ENCODE measurements at regions of chr6 and their contacts with region 1.

Region 1: GRCh38 chr6:30616811-30617564 is at the start of gene PPP1R10:
- DNase-seq: peak; percentile 86 to 100 (median 99)
- ATAC-seq: peak; percentile 89
- H3K4me3 ChIP-seq: peak within 1 kb of the TSS; percentile 90
- H3K4me3 Mint-ChIP-seq: peak within 1 kb of the TSS; percentile 88 to 100 (median 96)
- H3K27ac ChIP-seq: peak within 1 kb of the TSS; percentile 93
- H3K27ac Mint-ChIP-seq: peak within 1 kb of the TSS; percentile 98 to 100 (median 100)
- H3K4me1 ChIP-seq: peaks cover 21 to 33% of the 10 kb centered on the region in 2 donors
- H3K4me1 Mint-ChIP-seq: peaks cover 28 to 51% (median 43%) of the 10 kb centered on the region in 7 donors
- H3K27me3 ChIP-seq: no peaks in the 10 kb centered on the region
- H3K27me3 Mint-ChIP-seq: peaks cover 0 to 14% (median 0%) of the 10 kb centered on the region in 5 donors
- total RNA-seq, gene PPP1R10: 108 to 286 (median 146) TPM

Region 2: DNA sequence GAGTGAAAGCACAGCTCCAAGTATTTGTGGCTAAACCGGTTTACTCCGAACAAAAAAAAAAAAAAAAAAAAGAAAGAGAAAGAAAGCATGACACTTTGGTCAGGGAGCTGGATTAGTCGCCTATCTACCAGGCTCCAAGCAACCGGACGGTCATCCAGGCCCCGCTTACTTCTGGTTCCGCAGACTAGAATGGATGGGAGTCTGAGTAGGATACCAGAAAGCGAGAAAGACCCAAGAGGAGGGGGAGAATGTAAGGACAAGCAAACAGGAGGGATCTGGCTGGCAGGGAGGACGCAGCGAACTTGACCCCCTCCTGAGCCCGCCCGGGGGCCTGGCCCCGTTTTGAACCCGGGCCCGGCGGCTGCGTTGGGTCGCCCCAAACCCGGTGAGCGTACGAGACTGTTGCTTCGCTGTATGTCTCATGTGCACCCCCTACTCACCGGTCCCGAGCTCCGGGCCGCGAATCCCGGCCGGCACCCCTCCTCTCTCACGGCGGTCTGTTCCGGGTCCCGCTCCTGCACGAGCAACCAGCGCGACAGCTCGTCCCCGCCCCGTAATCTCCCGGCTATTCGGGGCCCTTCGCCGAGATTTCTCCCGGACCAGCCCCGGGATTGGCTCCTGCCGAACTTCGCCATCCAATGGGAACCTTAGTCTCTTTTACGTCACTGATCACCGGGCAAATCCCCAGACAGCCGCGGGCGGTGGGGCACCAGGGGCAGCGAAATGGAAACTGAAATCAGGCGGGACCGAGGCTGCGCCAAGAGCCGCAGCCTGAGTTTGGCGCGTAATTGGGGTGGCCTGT is 403.9 kb before region 1 on chr6 and contains the start of gene TRIM26:
- CTCF ChIA-PET with region 1: no interaction called
- POLR2A ChIA-PET with region 1: no interaction called
- intact Hi-C with region 1: loop called in 1 of 2 experiments (anchors 5 kb)
- DNase-seq: peak; percentile 88 to 99 (median 97)
- ATAC-seq: peak; percentile 94
- H3K4me3 ChIP-seq: peak within 1 kb of the TSS; percentile 83
- H3K4me3 Mint-ChIP-seq: peak within 1 kb of the TSS; percentile 89 to 100 (median 96)
- H3K27ac ChIP-seq: peak within 1 kb of the TSS; percentile 99
- H3K27ac Mint-ChIP-seq: peak within 1 kb of the TSS; percentile 96 to 100 (median 99)
- H3K4me1 ChIP-seq: peaks cover 32 to 39% of the 10 kb centered on the region in 2 donors
- H3K4me1 Mint-ChIP-seq: peaks cover 47 to 62% (median 52%) of the 10 kb centered on the region in 7 donors
- H3K27me3 ChIP-seq: no peaks in the 10 kb centered on the region
- H3K27me3 Mint-ChIP-seq: peaks cover 0 to 5% (median 0%) of the 10 kb centered on the region in 5 donors
- total RNA-seq, gene TRIM26: 40.1 to 73.1 (median 49.1) TPM

Region 3: DNA sequence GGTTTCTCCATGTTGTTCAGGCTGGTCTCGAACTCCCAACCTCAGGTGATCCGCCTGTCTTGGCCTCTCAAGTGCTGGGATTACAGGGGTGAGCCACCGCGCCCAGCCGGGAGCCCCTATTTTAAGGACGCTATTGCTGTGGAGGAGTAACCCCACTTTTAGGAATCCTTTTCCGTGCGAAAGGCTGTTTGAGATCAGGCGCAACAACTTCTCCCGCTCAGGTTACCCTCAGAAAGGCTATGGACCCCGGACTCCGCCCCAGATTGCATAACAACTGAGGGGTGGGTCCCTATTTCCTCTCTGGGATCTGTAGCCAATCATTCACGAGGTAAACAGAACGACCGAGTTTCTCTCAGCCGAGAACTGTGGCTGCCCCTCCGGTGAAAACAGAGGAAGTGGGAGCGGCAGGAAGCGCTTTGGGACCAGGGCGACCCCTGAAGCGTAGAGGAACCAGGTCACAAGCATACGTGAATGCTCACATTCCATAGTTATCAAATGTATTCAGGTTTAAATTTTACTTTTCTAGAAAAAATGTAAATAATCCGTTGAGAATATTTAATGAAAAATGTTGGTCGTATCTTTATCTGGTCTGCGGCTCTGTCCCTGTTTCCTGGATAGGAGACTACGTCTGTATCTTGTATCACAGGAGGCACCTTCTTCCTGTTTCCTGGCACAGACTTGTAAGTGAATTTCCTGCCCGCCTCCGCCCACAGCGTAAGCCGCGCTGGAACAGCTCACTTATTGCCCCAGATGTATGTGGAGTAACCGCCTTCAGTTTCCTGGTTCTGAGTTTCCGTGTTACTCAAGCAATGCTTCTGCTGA is 100.8 kb before region 1 on chr6:
- CTCF ChIA-PET with region 1: no interaction called
- POLR2A ChIA-PET with region 1: interaction called, 15 read pairs
- intact Hi-C with region 1: loop called in 1 of 2 experiments (anchors 1 kb)
- DNase-seq: peak; percentile 60 to 97 (median 95)
- ATAC-seq: peak; percentile 93
- H3K4me3 ChIP-seq: peak overlapping the region; percentile 64
- H3K4me3 Mint-ChIP-seq: peak overlapping the region; percentile 82 to 96 (median 89)
- H3K27ac ChIP-seq: peak overlapping the region; percentile 82
- H3K27ac Mint-ChIP-seq: peak overlapping the region; percentile 97 to 100 (median 99)
- H3K4me1 ChIP-seq: peaks cover 20 to 62% of the 10 kb centered on the region in 2 donors
- H3K4me1 Mint-ChIP-seq: peaks cover 31 to 91% (median 62%) of the 10 kb centered on the region in 7 donors
- H3K27me3 ChIP-seq: no peaks in the 10 kb centered on the region
- H3K27me3 Mint-ChIP-seq: no peaks in the 10 kb centered on the region

Region 4: GRCh38 chr6:30600451-30600961 is 16.5 kb before region 1 on chr6:
- CTCF ChIA-PET with region 1: interaction called, 8 read pairs
- POLR2A ChIA-PET with region 1: interaction called, 189 read pairs
- intact Hi-C with region 1: loop called in 1 of 2 experiments (anchors 2 kb)
- DNase-seq: no peak
- ATAC-seq: no peak
- H3K4me3 ChIP-seq: no peak overlapping the region
- H3K4me3 Mint-ChIP-seq: no peak overlapping the region
- H3K27ac ChIP-seq: peak overlapping the region; percentile 47
- H3K27ac Mint-ChIP-seq: peak overlapping the region in 7 of 9 donors; percentile 58 to 85 (median 79)
- H3K4me1 ChIP-seq: peaks cover 3 to 5% of the 10 kb centered on the region in 2 donors
- H3K4me1 Mint-ChIP-seq: peaks cover 16 to 35% (median 25%) of the 10 kb centered on the region in 7 donors
- H3K27me3 ChIP-seq: no peaks in the 10 kb centered on the region
- H3K27me3 Mint-ChIP-seq: no peaks in the 10 kb centered on the region

Region 5: GRCh38 chr6:30717042-30717844 is 100.3 kb after region 1 on chr6 and contains the start of gene MDC1:
- CTCF ChIA-PET with region 1: interaction called, 16 read pairs
- POLR2A ChIA-PET with region 1: interaction called, 52 read pairs
- intact Hi-C with region 1: loop called (anchors 1 kb)
- DNase-seq: peak; percentile 83 to 100 (median 99)
- ATAC-seq: peak; percentile 84
- H3K4me3 ChIP-seq: peak within 1 kb of the TSS; percentile 73
- H3K4me3 Mint-ChIP-seq: peak within 1 kb of the TSS; percentile 90 to 99 (median 96)
- H3K27ac ChIP-seq: peak within 1 kb of the TSS; percentile 84
- H3K27ac Mint-ChIP-seq: peak within 1 kb of the TSS; percentile 97 to 100 (median 99)
- H3K4me1 ChIP-seq: peaks cover 20 to 22% of the 10 kb centered on the region in 2 donors
- H3K4me1 Mint-ChIP-seq: peaks cover 30 to 60% (median 52%) of the 10 kb centered on the region in 7 donors
- H3K27me3 ChIP-seq: no peaks in the 10 kb centered on the region
- H3K27me3 Mint-ChIP-seq: no peaks in the 10 kb centered on the region
- total RNA-seq, gene MDC1: 40.3 to 78.9 (median 62.0) TPM

Region 6: GRCh38 chr6:31197559-31198305 is 580.7 kb after region 1 on chr6:
- CTCF ChIA-PET with region 1: no interaction called
- POLR2A ChIA-PET with region 1: interaction called, 4 read pairs
- intact Hi-C with region 1: loop called in 1 of 2 experiments (anchors 1 kb)
- DNase-seq: peak; percentile 78 to 98 (median 96)
- ATAC-seq: peak; percentile 88
- H3K4me3 ChIP-seq: peak overlapping the region; percentile 82
- H3K4me3 Mint-ChIP-seq: peak overlapping the region; percentile 84 to 99 (median 89)
- H3K27ac ChIP-seq: peak overlapping the region; percentile 100
- H3K27ac Mint-ChIP-seq: peak overlapping the region; percentile 82 to 100 (median 97)
- H3K4me1 ChIP-seq: peaks cover 27 to 28% of the 10 kb centered on the region in 2 donors
- H3K4me1 Mint-ChIP-seq: peaks cover 47 to 69% (median 59%) of the 10 kb centered on the region in 7 donors
- H3K27me3 ChIP-seq: no peaks in the 10 kb centered on the region
- H3K27me3 Mint-ChIP-seq: peaks cover 0 to 3% (median 0%) of the 10 kb centered on the region in 5 donors

Region 7: DNA sequence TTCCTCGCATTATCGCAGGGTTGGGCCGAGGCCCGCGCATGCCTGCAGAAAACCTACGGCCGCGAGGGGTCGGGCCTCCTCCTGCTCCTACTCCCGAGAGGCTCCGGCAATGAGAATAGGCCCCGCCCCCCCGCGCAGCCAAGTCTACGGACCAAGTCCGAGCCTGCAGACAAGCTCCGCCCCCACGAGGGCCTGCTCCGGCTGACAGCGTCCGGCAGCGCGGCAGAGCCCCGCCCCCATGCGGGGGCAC is 1578.6 kb after region 1 on chr6:
- CTCF ChIA-PET with region 1: no interaction called
- POLR2A ChIA-PET with region 1: no interaction called
- intact Hi-C with region 1: loop called in 1 of 2 experiments (anchors 5 kb)
- DNase-seq: peak; percentile 94 to 100 (median 98)
- ATAC-seq: peak; percentile 89
- H3K4me3 ChIP-seq: peak overlapping the region; percentile 98
- H3K4me3 Mint-ChIP-seq: peak overlapping the region; percentile 92 to 99 (median 97)
- H3K27ac ChIP-seq: peak overlapping the region; percentile 97
- H3K27ac Mint-ChIP-seq: peak overlapping the region; percentile 86 to 99 (median 97)
- H3K4me1 ChIP-seq: peaks cover 20 to 29% of the 10 kb centered on the region in 2 donors
- H3K4me1 Mint-ChIP-seq: peaks cover 24 to 40% (median 31%) of the 10 kb centered on the region in 7 donors
- H3K27me3 ChIP-seq: no peaks in the 10 kb centered on the region
- H3K27me3 Mint-ChIP-seq: no peaks in the 10 kb centered on the region